ENCODE measurements at regions of chr4 and their contacts with region 1.

Region 1: DNA sequence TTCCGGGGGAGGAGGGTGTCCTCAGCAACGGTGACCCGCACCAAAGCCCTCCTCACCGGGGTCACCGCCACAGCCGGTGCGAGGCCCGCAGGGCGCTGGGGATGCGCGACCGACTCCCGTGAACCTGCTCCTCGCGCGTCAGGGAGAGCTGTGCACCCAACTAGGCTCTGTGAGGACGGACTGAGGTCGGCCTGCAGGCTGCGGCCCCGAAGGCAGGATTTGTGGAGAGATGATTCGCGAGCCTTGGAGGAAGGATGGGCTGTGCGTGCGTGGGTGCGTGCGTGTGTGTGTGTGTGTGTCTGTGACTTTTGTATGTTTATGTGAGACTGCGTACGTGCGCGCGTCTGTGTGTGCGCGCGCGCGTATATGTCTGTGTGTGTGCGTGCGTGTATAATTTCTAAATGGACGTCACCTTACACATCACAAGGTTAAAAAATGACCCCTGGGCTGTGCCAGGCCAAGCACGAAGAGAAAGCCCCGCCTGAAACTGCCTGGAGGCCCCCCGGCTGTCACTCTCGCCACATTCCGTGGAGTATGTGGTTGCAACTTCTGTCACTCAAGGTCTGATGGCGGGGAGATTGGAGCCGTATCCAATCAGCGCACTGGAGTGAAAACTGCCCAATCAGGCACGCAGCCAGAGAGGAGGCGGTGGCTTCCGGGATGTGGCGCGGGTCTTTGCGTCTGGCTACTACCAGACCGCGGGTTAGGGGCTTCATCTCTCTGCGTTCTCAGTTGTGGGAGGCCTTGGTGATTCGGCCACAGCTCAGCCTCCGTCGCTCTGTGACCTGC is at the start of gene ZNF141:
- DNase-seq: peak; percentile 90
- H3K4me3 Mint-ChIP-seq: peak within 1 kb of the TSS; percentile 99
- H3K27ac Mint-ChIP-seq: peak within 1 kb of the TSS; percentile 99
- H3K4me1 Mint-ChIP-seq: peaks cover 14% of the 10 kb centered on the region
- H3K27me3 Mint-ChIP-seq: no peaks in the 10 kb centered on the region
- total RNA-seq, gene ZNF141: 23.8 and 27.5 TPM in 2 replicates

Region 2: DNA sequence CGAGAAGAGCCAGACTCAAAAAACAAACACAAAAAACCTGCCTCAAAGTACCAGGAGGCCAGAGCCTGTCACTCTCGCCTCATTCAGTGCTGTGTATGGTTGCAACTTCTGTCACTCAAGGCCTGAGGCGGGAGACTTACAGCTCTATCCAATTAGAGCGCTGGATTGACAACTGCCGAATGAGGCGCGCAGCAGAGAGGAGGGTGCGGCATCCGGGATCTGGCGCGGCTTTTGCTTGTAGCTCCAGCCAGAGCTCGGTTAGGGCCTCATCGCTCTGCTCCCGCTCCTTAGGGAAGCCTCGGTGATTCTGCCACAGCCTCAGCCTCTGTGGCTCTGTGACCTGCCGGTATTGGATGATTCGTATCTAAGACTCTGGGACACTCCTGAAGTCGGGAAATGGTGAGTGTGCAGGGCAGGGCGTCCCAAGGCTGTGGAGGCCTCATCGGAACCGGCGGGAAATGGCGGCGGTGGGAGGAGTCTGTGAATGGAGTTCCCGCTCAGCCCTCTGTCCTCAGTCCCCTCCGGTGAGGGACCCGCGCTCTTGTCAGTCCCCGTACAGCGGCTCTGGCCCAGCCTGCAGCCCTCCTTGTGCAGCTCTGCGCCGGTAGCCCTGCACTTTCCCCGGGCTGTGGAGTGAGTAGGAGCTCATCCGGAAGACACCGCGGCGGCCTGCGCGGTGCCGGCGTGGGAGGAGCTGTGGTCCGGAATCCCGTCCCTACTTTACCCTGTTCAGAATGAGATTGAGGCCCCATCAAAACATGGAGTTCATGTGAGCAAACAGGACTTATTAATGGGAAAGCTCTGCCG is 212.9 kb before region 1 on chr4 and contains the start of gene ZNF718:
- intact Hi-C with region 1: loop called (anchors 2 kb)
- DNase-seq: peak; percentile 93
- H3K4me3 Mint-ChIP-seq: peak within 1 kb of the TSS; percentile 96
- H3K27ac Mint-ChIP-seq: peak within 1 kb of the TSS; percentile 97
- H3K4me1 Mint-ChIP-seq: peaks cover 24% of the 10 kb centered on the region
- H3K27me3 Mint-ChIP-seq: no peaks in the 10 kb centered on the region
- total RNA-seq, gene ZNF718: 8.6 and 8.8 TPM in 2 replicates

Region 3: DNA sequence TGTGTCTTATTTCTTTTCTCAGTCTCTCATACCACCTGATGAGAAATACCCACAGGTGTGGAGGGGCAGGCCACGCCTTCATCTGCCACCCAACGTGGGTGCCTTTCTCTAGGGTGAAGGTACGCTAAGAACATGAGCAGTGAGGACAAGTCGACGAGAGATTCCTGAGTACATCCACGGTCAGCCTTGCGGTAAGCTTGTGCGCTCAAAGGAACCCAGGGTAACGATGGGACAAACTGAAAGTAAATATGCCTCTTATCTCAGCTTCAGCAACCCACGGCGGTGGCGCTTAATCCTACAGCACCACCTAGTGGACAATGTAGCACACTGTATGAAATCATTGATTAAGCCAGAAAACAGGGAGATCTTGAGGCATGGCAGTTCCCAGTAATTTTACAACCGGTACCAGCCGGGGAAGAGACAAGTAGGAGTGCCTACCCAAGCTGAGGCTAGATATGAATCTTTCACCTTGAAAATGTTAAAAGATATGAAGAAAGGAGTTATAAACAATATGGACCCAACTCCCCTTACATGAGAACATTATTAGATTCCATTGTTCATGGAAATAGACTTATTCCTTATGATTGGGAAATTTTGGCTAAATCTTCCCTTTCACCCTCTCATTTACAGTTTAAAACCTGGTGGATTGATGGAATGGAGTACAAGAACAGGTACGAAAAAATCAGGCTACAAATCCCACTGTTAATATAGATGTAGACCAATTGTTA is 95.1 kb before region 1 on chr4:
- intact Hi-C with region 1: loop called (anchors 5 kb)
- DNase-seq: peak; percentile 61
- H3K4me3 Mint-ChIP-seq: peak overlapping the region; percentile 75
- H3K27ac Mint-ChIP-seq: peak overlapping the region; percentile 56
- H3K4me1 Mint-ChIP-seq: peaks cover 10% of the 10 kb centered on the region
- H3K27me3 Mint-ChIP-seq: no peaks in the 10 kb centered on the region

Region 4: DNA sequence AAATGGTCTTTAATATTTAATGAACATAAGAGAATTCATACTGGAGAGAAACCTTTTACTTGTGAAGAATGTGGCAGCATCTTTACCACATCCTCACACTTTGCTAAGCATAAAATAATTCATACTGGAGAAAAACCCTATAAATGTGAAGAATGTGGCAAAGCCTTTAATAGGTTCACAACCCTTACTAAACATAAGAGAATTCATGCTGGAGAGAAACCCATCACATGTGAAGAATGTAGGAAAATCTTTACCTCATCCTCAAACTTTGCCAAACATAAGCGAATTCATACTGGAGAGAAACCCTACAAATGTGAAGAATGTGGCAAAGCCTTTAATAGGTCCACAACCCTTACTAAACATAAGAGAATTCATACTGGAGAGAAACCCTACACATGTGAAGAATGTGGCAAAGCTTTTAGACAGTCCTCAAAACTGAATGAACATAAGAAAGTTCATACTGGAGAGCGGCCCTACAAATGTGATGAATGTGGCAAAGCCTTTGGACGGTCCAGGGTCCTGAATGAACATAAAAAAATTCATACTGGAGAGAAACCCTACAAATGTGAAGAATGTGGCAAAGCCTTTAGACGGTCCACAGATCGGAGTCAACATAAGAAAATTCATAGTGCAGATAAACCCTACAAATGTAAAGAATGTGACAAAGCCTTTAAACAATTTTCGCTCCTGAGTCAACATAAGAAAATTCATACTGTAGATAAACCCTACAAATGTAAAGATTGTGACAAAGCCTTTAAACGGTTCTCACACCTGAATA is 35.9 kb after region 1 on chr4:
- intact Hi-C with region 1: loop called (anchors 5 kb)
- DNase-seq: no peak
- H3K4me3 Mint-ChIP-seq: no peak overlapping the region
- H3K27ac Mint-ChIP-seq: no peak overlapping the region
- H3K4me1 Mint-ChIP-seq: no peaks in the 10 kb centered on the region
- H3K27me3 Mint-ChIP-seq: no peaks in the 10 kb centered on the region

Region 5: DNA sequence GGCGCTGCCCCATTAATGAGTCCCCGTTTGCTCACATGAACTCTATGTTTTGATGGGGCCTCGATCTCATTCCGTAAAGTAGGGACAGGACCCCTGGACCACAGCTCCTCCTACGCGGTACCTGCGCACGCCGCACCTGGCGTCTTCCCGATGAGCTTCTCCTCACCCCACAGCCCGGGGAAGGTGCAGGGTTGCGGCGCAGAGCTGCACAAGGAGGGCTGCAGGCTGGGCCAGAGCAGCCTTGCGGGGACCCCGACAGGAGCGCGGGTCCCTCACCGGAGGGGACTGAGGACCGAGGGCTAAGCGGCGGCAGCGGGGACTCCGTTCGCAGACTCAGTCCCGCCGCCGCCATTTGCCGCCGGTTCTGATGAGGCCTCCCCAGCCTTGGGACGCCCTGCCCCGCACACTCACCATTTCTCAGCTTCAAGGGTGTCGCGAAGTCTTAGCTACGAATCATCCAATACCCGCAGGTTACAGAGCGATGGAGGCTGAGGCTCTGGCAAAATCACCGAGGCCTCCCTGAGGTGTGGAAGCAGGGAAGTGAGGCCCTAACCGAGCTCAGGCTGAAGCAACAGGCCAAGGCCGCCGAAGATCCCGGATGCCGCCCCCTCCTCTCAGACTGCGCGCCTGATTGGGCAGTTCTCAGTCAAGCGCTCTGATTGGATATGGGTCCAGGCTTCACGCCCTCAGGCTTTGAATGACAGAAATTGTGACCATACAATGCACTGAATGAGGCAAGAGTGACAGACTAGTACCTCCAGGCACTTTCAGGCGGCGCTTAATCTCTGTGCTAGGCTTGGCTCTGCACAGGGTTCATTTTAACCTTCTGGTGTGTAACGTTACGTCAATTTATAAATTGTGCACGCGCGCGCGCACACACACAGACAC is 136.5 kb after region 1 on chr4:
- intact Hi-C with region 1: loop called (anchors 1 kb)
- DNase-seq: peak; percentile 94
- H3K4me3 Mint-ChIP-seq: peak overlapping the region; percentile 94
- H3K27ac Mint-ChIP-seq: peak overlapping the region; percentile 97
- H3K4me1 Mint-ChIP-seq: peaks cover 32% of the 10 kb centered on the region
- H3K27me3 Mint-ChIP-seq: no peaks in the 10 kb centered on the region

Region 6: DNA sequence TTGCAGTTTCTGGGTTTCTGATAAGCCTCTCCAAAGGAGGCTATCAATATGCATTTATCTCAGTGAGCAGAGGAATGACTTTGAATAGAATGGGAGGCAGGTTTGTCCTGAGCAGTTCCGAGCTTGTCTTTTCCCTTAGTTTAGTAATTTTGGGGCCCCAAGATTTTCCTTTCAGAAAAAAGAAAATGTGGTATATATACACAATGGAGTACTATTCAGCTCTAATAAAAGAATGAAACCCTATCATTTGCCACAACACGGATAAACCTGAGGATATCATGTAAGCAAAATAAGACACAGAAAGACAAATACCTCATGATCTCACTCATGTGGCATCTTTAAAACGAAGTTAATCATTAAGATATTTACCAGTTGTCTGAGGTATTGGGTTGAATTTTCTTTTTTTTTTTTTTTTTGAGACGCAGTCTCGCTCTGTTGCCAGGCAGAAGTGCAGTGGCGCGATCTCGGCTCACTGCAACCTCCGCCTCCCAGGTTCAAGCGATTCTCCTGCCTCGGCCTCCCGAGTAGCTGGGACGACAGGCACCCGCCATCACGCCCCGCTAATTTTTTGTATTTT is 161.1 kb after region 1 on chr4:
- intact Hi-C with region 1: loop called (anchors 1 kb)
- DNase-seq: no peak
- H3K4me3 Mint-ChIP-seq: peak overlapping the region; percentile 98
- H3K27ac Mint-ChIP-seq: peak overlapping the region; percentile 97
- H3K4me1 Mint-ChIP-seq: peaks cover 27% of the 10 kb centered on the region
- H3K27me3 Mint-ChIP-seq: no peaks in the 10 kb centered on the region

Region 7: GRCh38 chr4:683982-684622 is 346.8 kb after region 1 on chr4:
- intact Hi-C with region 1: loop called (anchors 5 kb)
- DNase-seq: peak; percentile 33
- H3K4me3 Mint-ChIP-seq: no peak overlapping the region
- H3K27ac Mint-ChIP-seq: no peak overlapping the region
- H3K4me1 Mint-ChIP-seq: no peaks in the 10 kb centered on the region
- H3K27me3 Mint-ChIP-seq: peaks cover 5% of the 10 kb centered on the region